Activated naive CD8-positive, alpha-beta T cell treated with anti-CD3 and anti-CD28 coated beads, Interleukin-2, amount 10 ng/mL, durations not matched to agents 7 days and 5 days (primary cell): ENCODE measurements at regions of chr10 and their contacts with region 1.

Region 1: DNA sequence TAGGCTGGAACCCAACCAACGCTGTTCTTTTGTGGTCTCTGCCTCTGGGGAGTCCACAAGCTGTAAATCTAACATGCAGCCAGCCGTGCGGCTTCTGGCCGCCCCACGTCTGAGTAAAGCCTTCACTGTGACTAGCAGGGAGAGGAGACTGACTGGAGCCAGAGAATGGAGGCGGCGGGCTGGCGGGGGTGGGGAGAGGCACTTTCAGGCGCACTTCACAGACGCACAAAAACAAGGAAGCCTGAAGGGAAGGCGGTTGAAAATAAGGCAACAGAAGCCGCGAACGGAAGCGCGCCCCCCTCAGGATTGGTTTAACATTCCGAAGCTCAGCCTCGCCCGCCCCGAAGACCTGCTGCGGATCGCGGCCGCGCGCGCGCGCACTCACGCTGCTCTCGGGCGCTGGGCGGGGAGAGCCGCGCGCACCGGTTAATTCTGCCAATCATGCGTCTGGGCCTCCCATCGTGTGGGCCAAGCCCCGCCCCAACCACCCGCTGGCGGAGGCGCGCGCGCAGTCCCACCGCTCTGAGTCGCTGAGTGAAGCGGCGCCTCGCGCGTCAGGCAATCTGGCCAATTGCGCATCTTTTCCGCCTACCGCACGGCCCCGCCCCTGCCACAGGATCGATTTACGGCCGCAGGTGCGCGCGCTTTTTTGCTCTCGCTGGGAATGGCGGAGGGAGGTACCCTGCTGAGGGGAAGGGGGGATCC is at the start of gene SFR1:
- DNase-seq: peak; percentile 99
- ATAC-seq: peak; percentile 96
- H3K4me3 Mint-ChIP-seq: peak within 1 kb of the TSS; percentile 96
- H3K27ac Mint-ChIP-seq: peak within 1 kb of the TSS; percentile 98
- H3K4me1 Mint-ChIP-seq: peaks cover 24% of the 10 kb centered on the region
- H3K27me3 Mint-ChIP-seq: peaks cover 18% of the 10 kb centered on the region
- total RNA-seq, gene SFR1: 13.3 to 15.7 TPM

Region 2: GRCh38 chr10:103901299-103901698 is 220.4 kb before region 1 on chr10:
- POLR2A ChIA-PET with region 1: interaction called, 18 read pairs
- DNase-seq: no peak
- ATAC-seq: peak; percentile 90
- H3K4me3 Mint-ChIP-seq: peak overlapping the region; percentile 65
- H3K27ac Mint-ChIP-seq: peak overlapping the region; percentile 23
- H3K4me1 Mint-ChIP-seq: peaks cover 37% of the 10 kb centered on the region
- H3K27me3 Mint-ChIP-seq: no peaks in the 10 kb centered on the region

Region 3: DNA sequence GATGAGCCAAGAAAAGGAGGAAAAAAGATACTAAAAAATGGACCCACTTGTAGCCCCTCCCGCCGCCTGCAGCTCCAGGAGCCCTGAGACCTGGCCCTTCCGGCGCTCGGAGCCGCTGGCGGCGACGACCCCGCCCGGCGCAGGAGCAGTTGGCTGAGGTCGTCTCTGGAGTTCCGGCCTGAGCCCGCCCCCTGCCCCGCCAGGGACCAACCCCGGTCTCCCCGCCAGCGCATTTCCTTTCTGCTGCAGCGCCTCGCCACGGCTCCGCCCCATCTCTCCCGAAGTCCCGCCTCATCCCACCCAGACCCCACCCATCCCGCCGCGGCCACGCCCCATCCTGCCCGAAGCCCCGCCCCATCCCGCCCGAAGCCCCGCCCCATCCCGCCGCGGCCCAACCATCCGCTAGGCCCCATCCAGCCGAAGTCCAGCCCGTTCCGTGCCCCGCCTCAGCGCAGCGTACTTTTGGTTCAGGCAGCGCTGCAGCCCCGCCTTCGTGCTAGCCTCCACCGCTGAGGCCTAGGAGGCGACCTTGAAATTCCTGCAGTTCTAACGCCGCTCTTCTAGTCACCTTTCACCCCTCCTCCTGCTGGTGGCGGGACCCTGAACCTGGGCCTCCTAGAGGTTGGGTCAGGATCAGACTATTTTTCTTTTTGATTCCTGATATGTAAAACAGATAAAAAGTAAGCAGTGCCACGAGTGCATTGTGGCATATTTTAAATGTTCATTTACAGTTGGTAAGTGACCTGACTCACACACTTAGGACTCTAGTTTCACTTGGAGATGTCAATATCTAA is 203.4 kb before region 1 on chr10 and contains the start of gene STN1:
- POLR2A ChIA-PET with region 1: interaction called, 12 read pairs
- DNase-seq: peak; percentile 93
- ATAC-seq: peak; percentile 93
- H3K4me3 Mint-ChIP-seq: peak within 1 kb of the TSS; percentile 97
- H3K27ac Mint-ChIP-seq: peak within 1 kb of the TSS; percentile 96
- H3K4me1 Mint-ChIP-seq: peaks cover 27% of the 10 kb centered on the region
- H3K27me3 Mint-ChIP-seq: no peaks in the 10 kb centered on the region
- total RNA-seq, gene STN1: 53.7 to 58.5 TPM

Region 4: GRCh38 chr10:103983367-103983911 is 138.2 kb before region 1 on chr10:
- POLR2A ChIA-PET with region 1: interaction called, 13 read pairs
- DNase-seq: no peak
- ATAC-seq: peak; percentile 95
- H3K4me3 Mint-ChIP-seq: peak overlapping the region; percentile 81
- H3K27ac Mint-ChIP-seq: peak overlapping the region; percentile 95
- H3K4me1 Mint-ChIP-seq: peaks cover 45% of the 10 kb centered on the region
- H3K27me3 Mint-ChIP-seq: no peaks in the 10 kb centered on the region

Region 5: GRCh38 chr10:104146882-104147281 is 25.2 kb after region 1 on chr10:
- POLR2A ChIA-PET with region 1: no interaction called
- DNase-seq: no peak
- ATAC-seq: no peak
- H3K4me3 Mint-ChIP-seq: no peak overlapping the region
- H3K27ac Mint-ChIP-seq: no peak overlapping the region
- H3K4me1 Mint-ChIP-seq: peaks cover 1% of the 10 kb centered on the region
- H3K27me3 Mint-ChIP-seq: peaks cover 26% of the 10 kb centered on the region

Region 6: GRCh38 chr10:104254493-104255310 is 133.0 kb after region 1 on chr10 and contains the start of gene GSTO1:
- POLR2A ChIA-PET with region 1: interaction called, 10 read pairs
- DNase-seq: peak; percentile 60
- ATAC-seq: peak; percentile 70
- H3K4me3 Mint-ChIP-seq: peak within 1 kb of the TSS; percentile 99
- H3K27ac Mint-ChIP-seq: peak within 1 kb of the TSS; percentile 93
- H3K4me1 Mint-ChIP-seq: peaks cover 47% of the 10 kb centered on the region
- H3K27me3 Mint-ChIP-seq: peaks cover 10% of the 10 kb centered on the region
- total RNA-seq, gene GSTO1: 92.2 to 97.7 TPM